Pancreas (tissue), 10 donors: ENCODE measurements at regions of chr4 and their contacts with region 1.

Region 1: GRCh38 chr4:157217708-157218107 is 2.8 kb upstream of the GRIA2 start:
- DNase-seq: no peak
- ATAC-seq: no peak
- H3K4me3 ChIP-seq: no peak overlapping the region
- H3K27ac ChIP-seq: no peak overlapping the region
- H3K4me1 ChIP-seq: peaks cover 0 to 4% (median 0%) of the 10 kb centered on the region in 3 donors
- H3K27me3 ChIP-seq: peaks cover 0 to 35% (median 6%) of the 10 kb centered on the region in 4 donors
- CTCF ChIP-seq: peak in 3 of 4 donors; percentile 8 to 32 (median 32)

Region 2: DNA sequence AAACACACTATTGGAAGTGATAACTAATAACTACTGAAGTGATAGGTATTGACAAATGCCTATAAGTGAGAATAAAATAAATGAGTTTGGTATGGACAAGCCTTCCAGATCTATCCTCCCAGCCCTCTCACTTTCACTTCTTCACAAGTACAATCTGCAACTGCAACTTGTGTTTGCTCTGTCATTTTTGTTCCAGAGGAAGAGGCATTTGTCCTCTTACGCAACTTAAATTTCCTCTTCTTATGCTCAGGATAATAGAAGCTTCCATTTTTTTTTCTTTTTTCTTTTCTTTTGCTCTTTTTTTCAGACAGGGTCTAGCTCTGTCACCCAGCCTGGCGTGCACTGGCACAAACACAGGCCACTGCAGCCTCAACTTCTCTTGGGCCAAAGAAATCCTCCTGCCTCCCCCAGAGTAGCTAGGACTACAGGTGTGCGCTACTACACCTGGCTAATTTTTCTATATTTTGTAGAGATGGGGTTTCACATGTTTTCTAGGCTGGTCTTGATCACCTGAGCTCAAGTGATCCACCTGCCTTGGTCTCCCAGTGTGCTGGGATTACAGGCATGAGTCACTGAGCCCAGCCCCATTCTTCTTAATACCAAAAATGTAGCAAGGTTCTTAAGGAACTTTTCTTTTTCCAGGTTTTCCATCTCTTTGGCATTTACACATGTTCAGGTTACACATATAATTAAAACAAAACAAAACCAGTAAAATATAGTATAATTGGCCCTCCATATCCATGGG is 319.2 kb before region 1 on chr4:
- intact Hi-C with region 1: no loop called
- DNase-seq: no peak
- ATAC-seq: peak in 2 of 4 donors; percentile 25 to 44
- H3K4me3 ChIP-seq: no peak overlapping the region
- H3K27ac ChIP-seq: no peak overlapping the region
- H3K4me1 ChIP-seq: peaks cover 0 to 11% (median 0%) of the 10 kb centered on the region in 3 donors
- H3K27me3 ChIP-seq: no peaks in the 10 kb centered on the region
- CTCF ChIP-seq: no peak

Region 3: GRCh38 chr4:157978680-157979361 is 761.1 kb after region 1 on chr4:
- intact Hi-C with region 1: loop called in 1 of 3 experiments (anchors 5 kb)
- DNase-seq: peak in 3 of 6 donors; percentile 7 to 44 (median 25)
- ATAC-seq: peak; percentile 69 to 93 (median 91)
- H3K4me3 ChIP-seq: peak overlapping the region in 1 of 4 donors; percentile 9
- H3K27ac ChIP-seq: no peak overlapping the region
- H3K4me1 ChIP-seq: peaks cover 0 to 9% (median 0%) of the 10 kb centered on the region in 3 donors
- H3K27me3 ChIP-seq: no peaks in the 10 kb centered on the region
- CTCF ChIP-seq: peak; percentile 44 to 77 (median 69)